Natural killer cell (primary cell): ENCODE measurements at regions of chr9 and their contacts with region 1.

Region 1: DNA sequence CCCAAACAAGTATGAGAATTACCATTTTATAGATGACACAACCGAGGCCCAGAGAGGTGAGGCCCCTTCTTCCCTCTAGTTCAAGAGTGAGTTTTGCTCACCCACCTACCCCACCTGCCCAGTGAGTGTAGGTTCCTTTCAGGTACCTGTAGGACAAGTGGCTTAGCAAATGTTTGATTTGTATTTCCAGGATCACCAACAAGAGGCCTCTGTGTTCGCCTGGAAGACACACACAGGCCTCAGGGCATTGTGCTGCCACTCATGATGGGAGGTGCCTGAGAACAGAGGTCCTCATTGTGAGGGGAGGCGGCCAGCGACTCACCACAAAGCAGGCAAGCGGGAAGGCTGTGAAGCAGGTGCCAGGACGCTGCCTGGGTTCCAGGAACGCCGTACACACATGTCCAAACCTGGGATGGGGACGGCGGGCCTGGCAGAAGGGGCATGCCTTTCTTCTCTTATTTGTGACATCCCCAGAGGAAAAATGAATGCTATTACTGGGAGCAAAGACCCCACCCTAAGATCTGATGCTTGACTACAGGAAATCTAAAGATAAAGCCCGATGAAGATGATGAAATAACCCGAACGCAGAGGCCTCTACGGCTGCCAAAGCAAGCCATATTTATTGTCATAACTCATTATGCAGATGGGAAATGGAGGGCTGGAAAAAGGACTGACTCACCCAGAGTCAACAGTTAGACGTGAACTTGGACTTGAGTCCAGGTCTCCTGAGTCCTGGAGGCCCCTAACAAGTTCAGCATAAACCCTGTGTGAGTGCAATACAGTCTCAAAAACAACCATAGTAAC is 60.2 kb upstream of the SLC25A51 start:
- DNase-seq: no peak
- ATAC-seq: peak in 1 of 3 donors; percentile 39
- H3K4me3 ChIP-seq: no peak overlapping the region
- H3K4me3 Mint-ChIP-seq: no peak overlapping the region
- H3K27ac ChIP-seq: no peak overlapping the region
- H3K27ac Mint-ChIP-seq: peak overlapping the region in 1 of 2 donors; percentile 79
- H3K4me1 ChIP-seq: no peaks in the 10 kb centered on the region
- H3K4me1 Mint-ChIP-seq: peaks cover 50 to 51% of the 10 kb centered on the region in 2 donors
- H3K27me3 ChIP-seq: no peaks in the 10 kb centered on the region
- H3K27me3 Mint-ChIP-seq: no peaks in the 10 kb centered on the region
- CTCF ChIP-seq: no peak

Region 2: DNA sequence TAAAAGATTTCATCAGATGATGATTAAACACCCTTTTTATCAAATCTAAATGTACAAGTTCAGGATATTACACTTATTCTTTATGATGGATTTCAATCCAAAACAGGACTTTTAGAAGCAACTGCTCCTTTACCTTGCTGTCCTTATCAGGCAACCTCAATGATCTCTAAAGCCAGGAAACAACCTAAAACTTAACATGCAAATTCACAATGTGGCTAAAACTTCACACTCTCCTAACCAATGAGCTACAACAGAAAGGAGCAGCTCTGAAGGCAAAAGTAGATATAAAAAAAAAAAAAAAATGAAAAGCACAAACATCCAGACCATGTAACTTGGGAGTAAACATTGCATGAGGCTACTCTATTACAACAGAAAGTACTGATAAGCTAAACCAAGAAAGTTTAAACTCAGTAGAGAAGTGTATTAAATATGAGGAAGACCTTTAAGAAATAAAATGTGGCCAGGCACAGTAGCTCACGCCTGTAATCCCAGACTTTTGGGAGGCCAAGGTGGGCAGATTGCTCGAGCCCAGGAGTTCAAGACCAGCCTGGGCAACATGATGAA is 83.1 kb before region 1 on chr9:
- intact Hi-C with region 1: no loop called
- DNase-seq: no peak
- ATAC-seq: peak in 1 of 3 donors; percentile 45
- H3K4me3 ChIP-seq: no peak overlapping the region
- H3K4me3 Mint-ChIP-seq: no peak overlapping the region
- H3K27ac ChIP-seq: no peak overlapping the region
- H3K27ac Mint-ChIP-seq: peak overlapping the region; percentile 6 to 45
- H3K4me1 ChIP-seq: no peaks in the 10 kb centered on the region
- H3K4me1 Mint-ChIP-seq: peaks cover 10 to 11% of the 10 kb centered on the region in 2 donors
- H3K27me3 ChIP-seq: no peaks in the 10 kb centered on the region
- H3K27me3 Mint-ChIP-seq: no peaks in the 10 kb centered on the region
- CTCF ChIP-seq: no peak

Region 3: DNA sequence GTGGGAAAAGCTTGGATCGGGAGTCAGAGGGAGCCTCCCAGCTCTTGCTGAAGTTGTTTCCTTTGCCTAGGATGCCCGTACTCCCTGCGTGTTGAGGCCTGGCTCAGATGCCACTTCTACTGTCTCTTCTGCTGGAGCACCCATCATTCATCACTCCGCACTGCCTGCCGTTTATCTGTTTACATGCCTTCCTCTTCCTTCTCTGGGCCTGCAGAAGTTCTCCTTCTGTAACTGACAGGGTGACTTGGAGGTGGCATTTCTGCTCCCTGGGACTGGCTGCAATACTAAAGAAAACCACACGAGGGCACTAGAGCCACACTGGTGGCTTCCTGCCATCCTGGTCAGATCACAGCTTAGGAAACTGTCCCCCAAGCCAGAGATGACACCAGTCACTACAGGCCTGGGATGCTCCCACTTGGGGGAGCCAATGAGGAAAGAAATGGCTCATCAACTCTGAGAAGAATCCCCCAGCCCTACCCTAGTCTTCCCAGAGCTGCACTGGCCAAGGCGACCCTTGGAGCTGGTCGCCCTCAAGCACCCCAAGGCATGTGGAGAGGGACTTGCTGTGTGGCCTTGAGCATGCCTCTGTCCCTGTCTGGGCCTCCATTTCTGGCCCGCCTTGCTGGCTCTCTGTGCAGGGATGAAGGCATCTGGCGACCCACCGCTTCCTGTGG is 50.5 kb before region 1 on chr9:
- intact Hi-C with region 1: no loop called
- DNase-seq: peak; percentile 80 to 85
- ATAC-seq: peak; percentile 88 to 95 (median 91)
- H3K4me3 ChIP-seq: no peak overlapping the region
- H3K4me3 Mint-ChIP-seq: no peak overlapping the region
- H3K27ac ChIP-seq: no peak overlapping the region
- H3K27ac Mint-ChIP-seq: no peak overlapping the region
- H3K4me1 ChIP-seq: peaks cover 13% of the 10 kb centered on the region
- H3K4me1 Mint-ChIP-seq: peaks cover 18 to 26% of the 10 kb centered on the region in 2 donors
- H3K27me3 ChIP-seq: no peaks in the 10 kb centered on the region
- H3K27me3 Mint-ChIP-seq: no peaks in the 10 kb centered on the region
- CTCF ChIP-seq: peak; percentile 97

Region 4: GRCh38 chr9:38068866-38069629 is 104.9 kb after region 1 on chr9 and contains the start of gene SHB:
- intact Hi-C with region 1: loop called (anchors 10 kb)
- DNase-seq: peak; percentile 68 to 89
- ATAC-seq: peak; percentile 82 to 85 (median 84)
- H3K4me3 ChIP-seq: peak within 1 kb of the TSS; percentile 75
- H3K4me3 Mint-ChIP-seq: peak within 1 kb of the TSS; percentile 91
- H3K27ac ChIP-seq: peak within 1 kb of the TSS; percentile 22
- H3K27ac Mint-ChIP-seq: peak within 1 kb of the TSS; percentile 75 to 84
- H3K4me1 ChIP-seq: peaks cover 28% of the 10 kb centered on the region
- H3K4me1 Mint-ChIP-seq: peaks cover 17 to 47% of the 10 kb centered on the region in 2 donors
- H3K27me3 ChIP-seq: peaks cover 11% of the 10 kb centered on the region
- H3K27me3 Mint-ChIP-seq: peaks cover 0 to 5% of the 10 kb centered on the region in 2 donors
- CTCF ChIP-seq: peak; percentile 34
- total RNA-seq, gene SHB: 2.7 to 7.1 (median 2.9) TPM